Heart left ventricle (tissue), 16 donors: ENCODE measurements at regions of chr12 and their contacts with region 1.

Region 1: DNA sequence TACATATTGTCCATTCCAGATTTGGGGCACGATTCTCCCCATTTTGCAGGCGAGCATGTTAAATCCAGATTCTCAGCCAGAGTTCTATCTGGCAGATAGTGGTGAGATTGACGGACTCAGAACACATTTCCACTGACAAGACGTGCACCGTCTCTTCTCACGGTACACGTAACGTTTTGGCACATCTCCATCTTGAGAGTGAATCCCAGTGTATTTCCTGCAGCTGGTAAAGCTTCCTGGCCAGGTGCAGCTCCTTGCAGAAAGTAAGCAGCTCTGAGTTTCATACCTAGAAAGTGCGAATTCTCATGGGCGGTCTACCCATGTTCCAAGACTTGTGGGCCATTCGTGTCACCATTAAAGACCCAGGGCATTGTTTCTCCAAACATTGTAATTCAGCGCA is 102.6 kb downstream of the TSPAN9 start:
- DNase-seq: no peak
- ATAC-seq: no peak
- H3K4me3 ChIP-seq: no peak overlapping the region
- H3K27ac ChIP-seq: peak overlapping the region in 1 of 12 donors; percentile 8
- H3K4me1 ChIP-seq: peaks cover 0 to 42% (median 19%) of the 10 kb centered on the region in 12 donors
- H3K27me3 ChIP-seq: no peaks in the 10 kb centered on the region
- CTCF ChIP-seq: no peak
- POLR2A ChIP-seq: no peak

Region 2: DNA sequence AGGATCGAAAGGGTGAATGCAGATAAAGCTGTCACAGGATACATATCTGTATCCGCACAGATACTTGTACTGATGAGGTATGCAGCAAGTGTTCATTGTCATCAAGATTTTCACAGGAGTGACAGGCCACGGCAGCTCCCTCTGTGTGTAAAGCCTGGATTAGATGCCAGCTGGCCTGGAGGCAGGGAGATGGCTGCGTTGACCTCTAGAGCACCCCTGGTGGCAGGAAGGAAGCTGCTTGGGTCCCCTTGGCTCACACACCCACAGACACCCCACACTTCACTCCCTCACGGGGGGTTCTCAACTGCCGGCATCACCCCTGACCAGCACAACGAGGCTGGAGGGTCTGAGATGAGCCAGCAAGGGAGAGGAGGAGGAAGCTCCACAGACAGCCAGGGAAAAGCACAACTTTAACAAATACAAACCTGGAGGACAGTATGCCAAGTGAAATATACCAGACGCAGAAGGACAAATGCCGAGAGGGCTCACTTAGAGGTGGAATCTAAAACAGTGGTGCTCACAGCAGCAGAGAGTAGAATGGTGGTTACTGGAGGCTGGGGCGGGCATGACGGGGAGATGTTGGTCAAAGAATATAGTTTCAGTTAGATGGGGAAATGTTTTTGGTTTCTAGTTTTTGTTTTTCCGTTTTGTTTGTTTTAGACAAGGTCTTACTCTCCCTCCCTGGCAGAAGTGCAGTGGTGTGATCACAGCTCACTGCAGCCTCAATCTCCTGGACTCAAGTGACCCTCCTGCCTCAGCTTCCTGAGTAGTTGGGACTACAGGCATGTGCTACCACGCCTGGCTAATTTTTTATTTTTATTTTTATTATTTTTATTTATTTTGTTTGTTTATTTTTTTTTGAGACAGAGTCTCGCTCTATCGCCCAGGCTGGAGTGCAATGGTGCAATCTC is 174.8 kb before region 1 on chr12:
- intact Hi-C with region 1: no loop called
- DNase-seq: no peak
- ATAC-seq: peak; percentile 33 to 62 (median 40)
- H3K4me3 ChIP-seq: no peak overlapping the region
- H3K27ac ChIP-seq: peak overlapping the region in 1 of 12 donors; percentile 38
- H3K4me1 ChIP-seq: peaks cover 0 to 12% (median 3%) of the 10 kb centered on the region in 12 donors
- H3K27me3 ChIP-seq: no peaks in the 10 kb centered on the region
- CTCF ChIP-seq: peak in 6 of 12 donors; percentile 6 to 31 (median 22)
- POLR2A ChIP-seq: no peak

Region 3: DNA sequence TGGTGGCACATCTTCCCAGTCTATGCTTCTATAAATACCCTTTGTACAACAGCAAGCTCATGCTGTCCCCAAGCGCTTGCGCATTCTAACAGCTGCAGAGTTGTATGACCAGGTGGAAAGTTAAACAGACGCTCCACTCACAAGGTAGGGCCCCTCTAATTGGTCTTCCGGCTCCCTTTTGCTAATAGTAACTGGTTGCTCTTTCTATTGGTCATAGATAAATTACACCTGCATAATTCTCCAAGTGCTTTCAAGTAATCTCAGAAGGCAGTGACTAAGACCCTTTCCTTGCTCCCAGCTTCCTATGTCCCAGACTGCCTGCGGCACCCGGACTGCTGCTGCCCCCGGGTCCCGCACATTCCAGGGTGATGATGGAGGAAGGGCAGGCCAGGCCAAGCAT is 108.6 kb before region 1 on chr12:
- intact Hi-C with region 1: no loop called
- DNase-seq: peak in 3 of 5 donors; percentile 6 to 59 (median 47)
- ATAC-seq: peak; percentile 55 to 71 (median 68)
- H3K4me3 ChIP-seq: no peak overlapping the region
- H3K27ac ChIP-seq: peak overlapping the region in 4 of 12 donors; percentile 30 to 51 (median 41)
- H3K4me1 ChIP-seq: peaks cover 0 to 38% (median 12%) of the 10 kb centered on the region in 12 donors
- H3K27me3 ChIP-seq: peaks cover 0 to 4% (median 0%) of the 10 kb centered on the region in 9 donors
- CTCF ChIP-seq: peak in 1 of 12 donors; percentile 19
- POLR2A ChIP-seq: no peak

Region 4: GRCh38 chr12:3148366-3149000 is 31.2 kb before region 1 on chr12:
- intact Hi-C with region 1: loop called in 1 of 10 experiments (anchors 5 kb)
- DNase-seq: peak; percentile 63 to 83 (median 74)
- ATAC-seq: peak in 3 of 4 donors; percentile 4 to 48 (median 47)
- H3K4me3 ChIP-seq: no peak overlapping the region
- H3K27ac ChIP-seq: peak overlapping the region in 2 of 12 donors; percentile 7 to 39
- H3K4me1 ChIP-seq: peaks cover 38 to 93% (median 72%) of the 10 kb centered on the region in 12 donors
- H3K27me3 ChIP-seq: no peaks in the 10 kb centered on the region
- CTCF ChIP-seq: no peak
- POLR2A ChIP-seq: no peak

Region 5: GRCh38 chr12:3326156-3326849 is 146.6 kb after region 1 on chr12:
- intact Hi-C with region 1: no loop called
- DNase-seq: peak in 1 of 5 donors; percentile 54
- ATAC-seq: no peak
- H3K4me3 ChIP-seq: no peak overlapping the region
- H3K27ac ChIP-seq: peak overlapping the region in 1 of 12 donors; percentile 42
- H3K4me1 ChIP-seq: peaks cover 0 to 19% (median 0%) of the 10 kb centered on the region in 12 donors
- H3K27me3 ChIP-seq: no peaks in the 10 kb centered on the region
- CTCF ChIP-seq: no peak
- POLR2A ChIP-seq: no peak